AG04449 (cell line): ENCODE measurements at regions of chr1 and their contacts with region 1.

Region 1: GRCh38 chr1:45359882-45360513 is 19.8 kb upstream of the MUTYH start:
- DNase-seq: no peak
- H3K4me3 ChIP-seq: no peak overlapping the region
- CTCF ChIP-seq: peak; percentile 49

Region 2: GRCh38 chr1:45322486-45323040 is 37.4 kb before region 1 on chr1:
- CTCF ChIA-PET with region 1: no interaction called
- POLR2A ChIA-PET with region 1: no interaction called
- DNase-seq: no peak
- H3K4me3 ChIP-seq: no peak overlapping the region
- CTCF ChIP-seq: no peak

Region 3: DNA sequence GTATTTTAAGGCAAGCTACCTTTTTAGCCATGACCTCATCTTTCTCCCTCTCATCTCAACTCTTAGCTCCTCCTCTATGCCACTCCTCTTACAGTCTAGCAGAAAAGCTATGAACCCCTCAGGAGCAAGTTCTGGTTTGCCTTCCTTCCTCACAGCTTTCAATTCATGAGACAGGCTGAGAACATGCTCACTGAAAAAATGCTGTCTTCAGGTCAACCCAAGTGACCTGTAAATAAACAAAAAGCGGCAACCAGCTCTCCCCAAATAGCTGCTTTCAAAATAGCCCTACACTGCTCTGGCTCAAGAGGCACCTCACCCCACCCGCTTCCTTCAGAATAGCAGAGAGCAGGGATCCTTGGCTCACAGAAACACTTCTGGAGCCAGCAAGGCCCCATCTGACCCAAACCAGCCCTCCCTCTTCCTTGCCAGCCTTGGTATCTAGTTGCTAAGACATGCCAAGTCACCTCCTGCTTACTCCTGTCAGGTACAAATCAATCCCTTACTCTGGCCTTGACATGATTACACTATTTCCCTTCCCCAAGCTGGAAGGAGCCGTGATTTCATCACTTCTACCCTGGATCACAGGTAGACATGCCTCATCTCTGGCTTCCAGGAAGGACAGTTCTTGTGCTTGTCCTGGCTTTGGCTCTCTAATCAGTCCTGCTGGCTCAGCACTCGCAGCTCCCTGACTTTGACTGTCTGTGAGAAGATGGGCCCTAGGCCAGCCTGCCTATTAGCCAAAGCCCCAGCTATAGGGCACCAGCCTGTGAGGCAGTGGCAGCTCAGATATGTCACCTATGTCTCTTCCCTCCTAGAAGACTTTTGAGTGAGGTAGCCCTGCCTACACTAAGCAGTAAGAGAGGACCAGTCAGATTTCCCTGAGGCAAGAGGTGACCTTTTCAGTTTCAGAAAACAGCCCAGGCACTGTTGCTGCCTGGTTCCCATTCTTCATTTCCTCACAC is 11.0 kb before region 1 on chr1:
- CTCF ChIA-PET with region 1: interaction called, 83 read pairs
- POLR2A ChIA-PET with region 1: no interaction called
- DNase-seq: no peak
- H3K4me3 ChIP-seq: no peak overlapping the region
- CTCF ChIP-seq: no peak

Region 4: DNA sequence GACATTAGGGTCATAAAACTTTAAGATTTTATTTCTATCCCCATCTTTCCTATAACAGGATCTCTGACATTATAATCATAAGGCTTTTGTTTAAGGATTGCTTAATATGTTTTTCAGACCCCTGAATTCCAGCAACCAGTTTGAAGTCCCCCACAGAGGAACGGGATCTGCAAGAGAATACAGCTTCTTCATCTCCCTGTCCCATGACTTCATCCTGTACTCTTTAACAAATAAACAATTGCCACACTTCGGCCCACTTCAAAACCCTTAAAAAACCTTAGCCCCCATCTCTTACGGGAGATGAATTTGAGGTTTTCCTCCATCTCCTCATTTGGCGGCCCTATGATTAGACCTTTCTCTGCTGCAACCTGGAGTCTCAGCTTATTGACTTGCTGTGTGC is 95.2 kb after region 1 on chr1:
- CTCF ChIA-PET with region 1: no interaction called
- POLR2A ChIA-PET with region 1: no interaction called
- DNase-seq: no peak
- H3K4me3 ChIP-seq: no peak overlapping the region
- CTCF ChIP-seq: no peak

Region 5: GRCh38 chr1:45490626-45491486 is 130.9 kb after region 1 on chr1 and contains the start of gene TESK2:
- CTCF ChIA-PET with region 1: interaction called, 418 read pairs
- POLR2A ChIA-PET with region 1: interaction called, 4 read pairs
- DNase-seq: peak; percentile 94
- H3K4me3 ChIP-seq: peak within 1 kb of the TSS; percentile 91
- CTCF ChIP-seq: peak; percentile 16

Region 6: DNA sequence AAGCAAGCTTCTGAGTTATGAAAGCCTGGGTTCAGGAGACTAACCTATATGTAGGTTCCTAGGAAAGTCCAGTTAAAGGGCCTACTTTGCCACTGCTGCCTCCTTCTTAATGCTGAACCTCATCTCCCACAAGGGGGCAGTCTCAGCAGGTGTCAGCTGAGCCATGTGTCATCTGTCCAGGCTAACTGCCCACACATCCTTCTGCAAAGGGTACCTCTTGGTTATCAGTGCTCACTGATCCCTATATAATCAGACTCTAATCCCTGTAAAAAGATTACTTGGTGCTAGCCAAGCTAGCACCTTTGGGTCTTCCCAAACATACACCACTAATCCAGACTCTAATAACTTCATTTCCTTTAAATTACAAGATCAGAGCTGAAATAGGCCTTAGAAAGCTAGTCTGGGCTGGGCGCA is 152.7 kb after region 1 on chr1:
- CTCF ChIA-PET with region 1: interaction called, 11 read pairs
- POLR2A ChIA-PET with region 1: no interaction called
- DNase-seq: no peak
- H3K4me3 ChIP-seq: no peak overlapping the region
- CTCF ChIP-seq: peak; percentile 67